Head of caudate nucleus (tissue), 42 donors: ENCODE measurements at regions of chr17 and their contacts with region 1.

Region 1: DNA sequence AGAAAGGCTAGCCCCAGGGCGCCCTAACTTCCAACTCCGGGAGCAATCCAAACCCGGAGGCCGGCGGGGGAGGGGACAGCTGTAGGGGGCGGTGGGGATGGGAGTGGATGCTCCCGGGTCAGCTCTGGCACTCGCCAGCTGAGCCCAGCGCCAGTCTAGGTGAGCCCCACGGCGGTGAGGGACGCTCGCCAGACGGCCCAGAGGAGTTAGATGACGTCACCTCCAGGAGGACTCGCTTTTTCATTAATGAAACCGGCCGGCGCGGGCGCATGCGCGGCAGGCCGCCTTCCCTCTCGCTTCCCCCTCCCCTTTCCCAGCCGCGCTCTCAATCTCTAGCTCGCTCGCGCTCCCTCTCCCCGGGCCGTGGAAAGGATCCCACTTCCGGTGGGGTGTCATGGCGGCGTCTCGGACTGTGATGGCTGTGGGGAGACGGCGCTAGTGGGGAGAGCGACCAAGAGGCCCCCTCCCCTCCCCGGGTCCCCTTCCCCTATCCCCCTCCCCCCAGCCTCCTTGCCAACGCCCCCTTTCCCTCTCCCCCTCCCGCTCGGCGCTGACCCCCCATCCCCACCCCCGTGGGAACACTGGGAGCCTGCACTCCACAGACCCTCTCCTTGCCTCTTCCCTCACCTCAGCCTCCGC is at the start of gene NF1:
- DNase-seq: peak; percentile 90 to 98 (median 95)

Region 2: GRCh38 chr17:31007695-31008373 is 86.9 kb before region 1 on chr17:
- intact Hi-C with region 1: loop called (anchors 2 kb)
- DNase-seq: no peak